Calu3 (cell line): ENCODE measurements at regions of chr4 and their contacts with region 1.

Region 1: GRCh38 chr4:120331486-120332370 is 265.1 kb upstream of the MAD2L1 start:
- DNase-seq: peak; percentile 3
- H3K4me3 Mint-ChIP-seq: no peak overlapping the region
- H3K27ac Mint-ChIP-seq: no peak overlapping the region
- H3K4me1 Mint-ChIP-seq: peaks cover 15% of the 10 kb centered on the region
- H3K27me3 Mint-ChIP-seq: no peaks in the 10 kb centered on the region
- CTCF ChIP-seq: no peak

Region 2: GRCh38 chr4:118825799-118826198 is 1505.9 kb before region 1 on chr4:
- CTCF ChIA-PET with region 1: no interaction called
- intact Hi-C with region 1: no loop called
- DNase-seq: no peak
- H3K4me3 Mint-ChIP-seq: no peak overlapping the region
- H3K27ac Mint-ChIP-seq: no peak overlapping the region
- H3K4me1 Mint-ChIP-seq: peaks cover 23% of the 10 kb centered on the region
- H3K27me3 Mint-ChIP-seq: no peaks in the 10 kb centered on the region
- CTCF ChIP-seq: no peak

Region 3: DNA sequence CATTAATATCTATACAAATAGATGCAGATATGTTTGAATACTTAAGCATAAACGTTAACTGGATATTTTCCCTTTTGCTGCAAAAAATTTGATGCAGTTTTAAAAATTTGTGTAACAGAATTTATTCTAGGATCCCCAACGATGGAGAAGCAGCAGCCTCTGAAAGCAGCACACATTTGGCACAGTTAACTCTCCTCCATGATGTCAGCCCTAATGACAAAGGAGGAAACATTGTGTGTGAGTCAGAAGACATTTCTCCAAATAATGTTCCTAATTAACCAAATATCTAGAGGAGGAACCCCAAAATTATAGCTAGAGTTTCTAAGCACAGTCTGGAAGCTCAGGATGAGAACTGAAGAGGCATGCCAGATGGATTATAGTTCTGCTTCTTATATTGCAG is 16.8 kb after region 1 on chr4:
- CTCF ChIA-PET with region 1: no interaction called
- intact Hi-C with region 1: loop called (anchors 2 kb)
- DNase-seq: no peak
- H3K4me3 Mint-ChIP-seq: no peak overlapping the region
- H3K27ac Mint-ChIP-seq: no peak overlapping the region
- H3K4me1 Mint-ChIP-seq: no peaks in the 10 kb centered on the region
- H3K27me3 Mint-ChIP-seq: no peaks in the 10 kb centered on the region
- CTCF ChIP-seq: no peak